ENCODE measurements at regions of chr5 and their contacts with region 1.

Region 1: GRCh38 chr5:171913987-171914273 is 92.5 kb downstream of the FBXW11 start:
- DNase-seq: no peak
- ATAC-seq: no peak
- H3K4me3 ChIP-seq: no peak overlapping the region
- H3K27ac ChIP-seq: no peak overlapping the region
- H3K4me1 ChIP-seq: no peaks in the 10 kb centered on the region
- H3K27me3 ChIP-seq: no peaks in the 10 kb centered on the region
- CTCF ChIP-seq: no peak
- POLR2A ChIP-seq: no peak
- RAD21 ChIP-seq: no peak

Region 2: GRCh38 chr5:171901764-171902163 is 12.2 kb before region 1 on chr5:
- CTCF ChIA-PET with region 1: interaction called, 10 read pairs
- POLR2A ChIA-PET with region 1: no interaction called
- RAD21 ChIA-PET with region 1: no interaction called
- intact Hi-C with region 1: no loop called
- DNase-seq: no peak
- ATAC-seq: no peak
- H3K4me3 ChIP-seq: no peak overlapping the region
- H3K27ac ChIP-seq: no peak overlapping the region
- H3K4me1 ChIP-seq: no peaks in the 10 kb centered on the region
- H3K27me3 ChIP-seq: no peaks in the 10 kb centered on the region
- CTCF ChIP-seq: no peak
- POLR2A ChIP-seq: no peak
- RAD21 ChIP-seq: no peak

Region 3: GRCh38 chr5:172035039-172035438 is 121.1 kb after region 1 on chr5:
- CTCF ChIA-PET with region 1: interaction called, 40 read pairs
- POLR2A ChIA-PET with region 1: no interaction called
- RAD21 ChIA-PET with region 1: interaction called in 1 of 2 experiments, 4 read pairs
- intact Hi-C with region 1: loop called (anchors 1 kb)
- DNase-seq: no peak
- ATAC-seq: no peak
- H3K4me3 ChIP-seq: no peak overlapping the region
- H3K27ac ChIP-seq: no peak overlapping the region
- H3K4me1 ChIP-seq: no peaks in the 10 kb centered on the region
- H3K27me3 ChIP-seq: no peaks in the 10 kb centered on the region
- CTCF ChIP-seq: no peak
- POLR2A ChIP-seq: no peak
- RAD21 ChIP-seq: no peak

Region 4: GRCh38 chr5:172188033-172188892 is 274.3 kb after region 1 on chr5 and contains the start of gene STK10:
- CTCF ChIA-PET with region 1: interaction called, 6 read pairs
- POLR2A ChIA-PET with region 1: no interaction called
- RAD21 ChIA-PET with region 1: no interaction called
- intact Hi-C with region 1: loop called (anchors 1 kb)
- DNase-seq: peak; percentile 75
- ATAC-seq: peak; percentile 86
- H3K4me3 ChIP-seq: peak within 1 kb of the TSS; percentile 93 to 97
- H3K27ac ChIP-seq: peak within 1 kb of the TSS; percentile 75
- H3K4me1 ChIP-seq: peaks cover 10 to 28% of the 10 kb centered on the region in 2 experiments
- H3K27me3 ChIP-seq: no peaks in the 10 kb centered on the region
- CTCF ChIP-seq: peak in 2 of 3 experiments; percentile 76 to 81; a peak in 4 of 6 replicates
- POLR2A ChIP-seq: no peak
- RAD21 ChIP-seq: no peak
- total RNA-seq, gene STK10: 22.9 TPM

Region 5: DNA sequence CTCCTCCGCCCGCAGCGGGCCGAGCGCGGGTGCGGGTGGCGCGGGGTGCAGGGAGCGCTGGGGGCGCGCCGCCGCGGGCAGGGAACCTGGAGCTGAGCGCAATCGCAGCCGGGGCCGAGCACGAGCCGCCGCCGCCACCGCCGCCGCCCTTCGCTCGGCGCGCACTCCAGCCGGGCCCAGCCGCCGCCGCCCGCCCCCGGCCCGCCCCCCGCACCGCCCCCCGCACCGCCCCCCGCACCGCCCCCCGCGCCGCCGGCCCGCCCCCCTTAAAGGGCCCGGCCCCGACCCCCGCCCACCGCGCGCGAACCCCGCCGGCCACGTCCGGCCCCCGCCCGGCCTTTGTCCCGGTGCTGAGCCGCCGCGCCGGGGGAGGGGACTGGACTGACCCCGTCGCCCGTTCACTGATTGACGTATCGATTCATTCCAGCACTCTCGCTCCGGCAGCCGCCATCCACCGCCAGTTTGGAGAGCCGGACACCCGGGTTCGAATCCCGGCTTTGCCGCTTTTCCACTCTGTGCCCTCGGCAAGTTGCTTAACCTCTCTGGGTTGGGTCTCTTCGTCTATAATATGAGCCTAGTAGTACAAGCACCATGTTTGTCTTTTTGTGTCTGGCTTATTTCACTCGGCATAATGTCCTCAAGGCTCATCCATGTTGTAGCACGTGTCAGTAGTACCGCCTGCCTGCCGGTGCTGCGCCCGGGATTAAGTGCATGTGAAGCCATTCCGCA is 540.6 kb after region 1 on chr5 and contains the start of gene SH3PXD2B:
- CTCF ChIA-PET with region 1: no interaction called
- POLR2A ChIA-PET with region 1: no interaction called
- RAD21 ChIA-PET with region 1: no interaction called
- intact Hi-C with region 1: loop called (anchors 5 kb)
- DNase-seq: no peak
- ATAC-seq: peak; percentile 66
- H3K4me3 ChIP-seq: peak within 1 kb of the TSS; percentile 68 to 94
- H3K27ac ChIP-seq: peak within 1 kb of the TSS; percentile 60
- H3K4me1 ChIP-seq: peaks cover 12 to 44% of the 10 kb centered on the region in 2 experiments
- H3K27me3 ChIP-seq: no peaks in the 10 kb centered on the region
- CTCF ChIP-seq: no peak
- POLR2A ChIP-seq: peak; percentile 39
- RAD21 ChIP-seq: no peak
- total RNA-seq, gene SH3PXD2B: 27.5 TPM